ENCODE measurements at regions of chr3 and their contacts with region 1.

Region 1: GRCh38 chr3:184513276-184514170 is 48.1 kb upstream of the EPHB3 start:
- DNase-seq: peak; percentile 42
- H3K4me3 ChIP-seq: peak overlapping the region; percentile 46
- H3K27ac ChIP-seq: no peak overlapping the region
- H3K27me3 ChIP-seq: peaks cover 72% of the 10 kb centered on the region
- CTCF ChIP-seq: peak; percentile 85

Region 2: DNA sequence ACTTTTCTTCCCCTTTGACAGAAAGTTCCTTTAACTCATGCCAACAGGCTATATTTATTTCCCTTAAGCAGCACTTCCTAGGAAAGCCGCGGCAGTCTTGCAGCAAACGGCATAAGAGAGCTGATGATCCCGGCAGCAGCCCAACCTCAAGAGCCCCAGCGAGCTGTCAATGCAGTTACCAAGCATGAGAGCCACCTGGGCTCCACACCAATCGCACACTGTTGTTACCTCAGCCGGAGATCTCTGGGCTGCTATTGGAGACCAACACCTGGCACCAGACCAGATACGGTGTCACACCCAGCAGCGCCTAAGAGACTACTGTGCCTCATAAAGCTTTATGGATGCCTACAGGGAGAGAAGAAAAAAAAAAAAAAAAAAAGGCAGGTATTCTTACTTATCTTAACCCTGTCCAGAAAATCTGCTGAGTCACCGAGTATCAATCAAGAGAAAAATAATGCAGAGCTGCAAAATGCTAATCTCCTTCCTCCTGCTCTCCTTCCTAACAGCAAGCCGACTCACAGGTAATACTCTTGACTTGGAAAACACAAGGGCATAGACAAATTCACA is 507.5 kb before region 1 on chr3:
- CTCF ChIA-PET with region 1: no interaction called
- POLR2A ChIA-PET with region 1: no interaction called
- DNase-seq: no peak
- H3K4me3 ChIP-seq: no peak overlapping the region
- H3K27ac ChIP-seq: no peak overlapping the region
- H3K27me3 ChIP-seq: no peaks in the 10 kb centered on the region
- CTCF ChIP-seq: no peak

Region 3: GRCh38 chr3:184417619-184418327 is 95.8 kb before region 1 on chr3:
- CTCF ChIA-PET with region 1: interaction called, 32 read pairs
- POLR2A ChIA-PET with region 1: no interaction called
- DNase-seq: peak; percentile 21
- H3K4me3 ChIP-seq: no peak overlapping the region
- H3K27ac ChIP-seq: no peak overlapping the region
- H3K27me3 ChIP-seq: peaks cover 3% of the 10 kb centered on the region
- CTCF ChIP-seq: peak; percentile 98

Region 4: GRCh38 chr3:184469423-184469822 is 44.1 kb before region 1 on chr3:
- CTCF ChIA-PET with region 1: interaction called, 16 read pairs
- POLR2A ChIA-PET with region 1: no interaction called
- DNase-seq: no peak
- H3K4me3 ChIP-seq: no peak overlapping the region
- H3K27ac ChIP-seq: no peak overlapping the region
- H3K27me3 ChIP-seq: peaks cover 13% of the 10 kb centered on the region
- CTCF ChIP-seq: peak; percentile 66

Region 5: DNA sequence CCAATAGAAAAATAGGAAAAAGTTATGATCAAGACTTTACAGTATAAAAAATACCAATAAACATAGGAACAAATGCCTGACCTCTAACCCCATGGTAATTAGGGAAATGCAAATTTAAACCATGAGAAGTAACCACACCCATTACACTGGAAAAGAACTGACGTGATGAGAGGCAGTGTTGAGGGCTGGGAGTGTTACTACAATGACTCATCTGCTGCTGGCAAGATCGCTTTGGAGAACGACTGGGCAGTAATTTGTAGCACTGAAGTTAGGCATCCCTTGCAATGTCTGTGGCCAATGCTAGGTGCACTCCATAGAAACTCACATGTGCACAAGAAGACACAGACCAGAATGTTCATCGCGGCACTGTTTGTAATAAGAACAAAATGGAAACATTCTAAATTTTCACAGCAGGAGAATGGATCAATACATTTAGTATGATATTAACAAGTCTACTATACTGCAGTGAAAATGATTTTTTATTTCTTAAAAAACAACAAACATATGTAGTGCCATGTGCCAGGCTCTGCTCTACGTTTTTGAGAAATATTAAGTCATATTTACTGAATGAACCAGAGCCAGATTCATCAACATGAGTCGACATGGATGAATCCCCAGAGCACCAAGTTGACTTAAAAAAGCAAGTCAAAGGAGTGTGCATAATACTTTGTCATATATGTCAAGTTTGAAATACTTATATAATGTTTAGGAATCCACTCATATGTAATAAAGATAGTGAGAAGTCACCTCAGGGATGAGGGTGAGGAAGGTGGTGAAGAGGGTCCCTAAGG is 10.5 kb after region 1 on chr3:
- CTCF ChIA-PET with region 1: interaction called, 31 read pairs
- POLR2A ChIA-PET with region 1: no interaction called
- DNase-seq: no peak
- H3K4me3 ChIP-seq: no peak overlapping the region
- H3K27ac ChIP-seq: no peak overlapping the region
- H3K27me3 ChIP-seq: peaks cover 35% of the 10 kb centered on the region
- CTCF ChIP-seq: no peak

Region 6: GRCh38 chr3:184538600-184539431 is 25.3 kb after region 1 on chr3:
- CTCF ChIA-PET with region 1: interaction called, 10 read pairs
- POLR2A ChIA-PET with region 1: no interaction called
- DNase-seq: no peak
- H3K4me3 ChIP-seq: no peak overlapping the region
- H3K27ac ChIP-seq: no peak overlapping the region
- H3K27me3 ChIP-seq: peaks cover 49% of the 10 kb centered on the region
- CTCF ChIP-seq: no peak

Region 7: DNA sequence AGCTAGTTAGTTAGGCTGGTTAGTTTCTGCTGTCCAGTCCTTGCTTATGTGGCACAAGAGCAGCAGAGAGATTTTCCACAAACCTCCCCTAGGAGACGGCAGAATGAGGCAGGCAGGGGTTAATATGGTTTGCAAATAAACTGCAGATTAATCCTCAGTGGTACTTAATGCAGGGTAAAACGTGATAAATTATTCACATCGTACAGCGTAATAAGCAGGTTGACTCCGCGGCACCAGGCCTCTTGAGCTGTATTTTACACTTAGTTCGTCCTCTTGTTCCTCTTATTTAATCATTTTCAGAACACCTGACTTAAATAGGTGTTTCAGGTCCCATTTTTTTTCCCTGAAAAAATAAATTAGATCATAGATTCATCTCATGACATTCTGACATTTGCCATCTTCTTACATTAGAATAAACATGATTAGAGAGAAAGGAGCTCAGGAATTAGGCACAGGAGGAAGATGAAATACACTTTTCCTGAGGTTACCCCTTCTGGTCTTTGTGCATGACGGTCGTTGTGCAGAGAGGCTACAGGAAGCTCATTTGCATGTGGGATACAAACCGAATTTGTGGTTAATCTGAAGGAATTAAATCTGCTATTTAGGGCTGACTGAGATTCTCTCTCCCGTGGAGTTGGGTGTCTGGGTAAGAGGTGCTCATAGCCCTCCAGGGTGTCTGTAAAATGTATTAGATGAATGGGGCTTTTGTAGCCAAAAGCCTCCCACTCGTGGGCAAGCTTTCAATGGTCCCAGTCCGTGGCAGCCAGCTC is 271.4 kb after region 1 on chr3:
- CTCF ChIA-PET with region 1: no interaction called
- POLR2A ChIA-PET with region 1: no interaction called
- DNase-seq: no peak
- H3K4me3 ChIP-seq: no peak overlapping the region
- H3K27ac ChIP-seq: no peak overlapping the region
- H3K27me3 ChIP-seq: no peaks in the 10 kb centered on the region
- CTCF ChIP-seq: no peak

Region 8: GRCh38 chr3:184805351-184806038 is 292.0 kb after region 1 on chr3:
- CTCF ChIA-PET with region 1: interaction called, 10 read pairs
- POLR2A ChIA-PET with region 1: no interaction called
- DNase-seq: no peak
- H3K4me3 ChIP-seq: no peak overlapping the region
- H3K27ac ChIP-seq: no peak overlapping the region
- H3K27me3 ChIP-seq: no peaks in the 10 kb centered on the region
- CTCF ChIP-seq: no peak

Measured in AG04450 (cell line).